ENCODE measurements at regions of chr4 and their contacts with region 1.

Region 1: DNA sequence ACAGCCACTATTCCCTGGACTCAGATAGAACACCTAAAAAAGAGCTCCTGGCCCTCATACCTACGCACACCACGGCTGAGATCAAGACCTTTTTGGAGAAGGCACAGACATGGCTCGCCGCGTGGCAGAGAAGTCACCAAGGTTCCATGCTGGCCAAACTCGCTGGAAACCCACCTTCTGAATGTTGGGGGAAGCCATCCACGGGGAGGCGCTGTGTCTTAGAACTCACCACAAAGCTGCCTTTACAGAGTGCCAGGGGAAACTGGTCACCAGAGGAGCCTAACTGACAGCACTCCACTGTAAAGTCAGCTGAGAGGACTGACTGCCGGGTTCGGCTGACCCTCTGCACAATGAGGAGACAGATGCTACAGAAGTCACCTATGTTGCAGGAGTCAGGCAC is 97.9 kb downstream of the NEUROG2 start:
- DNase-seq: peak; percentile 19 to 84
- H3K4me3 ChIP-seq: no peak overlapping the region
- H3K27ac ChIP-seq: no peak overlapping the region
- H3K4me1 ChIP-seq: peaks cover 0 to 3% (median 1%) of the 10 kb centered on the region in 4 experiments; a peak in 2 of 7 replicates
- H3K27me3 ChIP-seq: no peaks in the 10 kb centered on the region
- CTCF ChIP-seq: peak; percentile 76 to 82 (median 78)
- EP300 ChIP-seq: no peak
- POLR2A ChIP-seq: no peak
- RAD21 ChIP-seq: peak; percentile 62 to 77

Region 2: GRCh38 chr4:112156112-112156511 is 262.0 kb before region 1 on chr4:
- CTCF ChIA-PET with region 1: no interaction called
- POLR2A ChIA-PET with region 1: no interaction called
- DNase-seq: no peak
- H3K4me3 ChIP-seq: no peak overlapping the region
- H3K27ac ChIP-seq: no peak overlapping the region
- H3K4me1 ChIP-seq: no peaks in the 10 kb centered on the region
- H3K27me3 ChIP-seq: no peaks in the 10 kb centered on the region
- CTCF ChIP-seq: no peak
- EP300 ChIP-seq: no peak
- POLR2A ChIP-seq: no peak
- RAD21 ChIP-seq: no peak

Region 3: GRCh38 chr4:112403081-112403945 is 14.8 kb before region 1 on chr4:
- CTCF ChIA-PET with region 1: interaction called, 12 read pairs
- POLR2A ChIA-PET with region 1: no interaction called
- DNase-seq: no peak
- H3K4me3 ChIP-seq: peak overlapping the region in 1 of 4 experiments; percentile 31; a peak in 2 of 8 replicates
- H3K27ac ChIP-seq: no peak overlapping the region
- H3K4me1 ChIP-seq: peaks cover 0 to 11% (median 3%) of the 10 kb centered on the region in 4 experiments; a peak in 4 of 7 replicates
- H3K27me3 ChIP-seq: no peaks in the 10 kb centered on the region
- CTCF ChIP-seq: no peak
- EP300 ChIP-seq: no peak
- POLR2A ChIP-seq: no peak
- RAD21 ChIP-seq: no peak

Region 4: GRCh38 chr4:112431158-112431557 is 13.1 kb after region 1 on chr4:
- CTCF ChIA-PET with region 1: interaction called, 13 read pairs
- POLR2A ChIA-PET with region 1: no interaction called
- DNase-seq: no peak
- H3K4me3 ChIP-seq: no peak overlapping the region
- H3K27ac ChIP-seq: no peak overlapping the region
- H3K4me1 ChIP-seq: no peaks in the 10 kb centered on the region
- H3K27me3 ChIP-seq: no peaks in the 10 kb centered on the region; a peak in 1 of 7 replicates
- CTCF ChIP-seq: no peak
- EP300 ChIP-seq: no peak
- POLR2A ChIP-seq: no peak
- RAD21 ChIP-seq: no peak

Measured in H1 (cell line).